Astrocyte of the spinal cord (primary cell): ENCODE measurements at regions of chrX and their contacts with region 1.

Region 1: GRCh38 chrX:150772150-150772970 is 79.2 kb downstream of the MTMR1 start:
- DNase-seq: peak; percentile 50
- H3K4me3 ChIP-seq: no peak overlapping the region
- CTCF ChIP-seq: peak; percentile 73

Region 2: GRCh38 chrX:151082076-151082948 is 310.0 kb after region 1 on chrX:
- in situ Hi-C with region 1: loop called (anchors 25 kb)
- DNase-seq: peak; percentile 56
- H3K4me3 ChIP-seq: no peak overlapping the region
- CTCF ChIP-seq: peak; percentile 91

Region 3: GRCh38 chrX:151722241-151722846 is 950.0 kb after region 1 on chrX:
- in situ Hi-C with region 1: no loop called
- DNase-seq: peak; percentile 3
- H3K4me3 ChIP-seq: no peak overlapping the region
- CTCF ChIP-seq: peak; percentile 50